Dorsolateral prefrontal cortex (tissue), 120 donors: ENCODE measurements at regions of chr2 and their contacts with region 1.

Region 1: DNA sequence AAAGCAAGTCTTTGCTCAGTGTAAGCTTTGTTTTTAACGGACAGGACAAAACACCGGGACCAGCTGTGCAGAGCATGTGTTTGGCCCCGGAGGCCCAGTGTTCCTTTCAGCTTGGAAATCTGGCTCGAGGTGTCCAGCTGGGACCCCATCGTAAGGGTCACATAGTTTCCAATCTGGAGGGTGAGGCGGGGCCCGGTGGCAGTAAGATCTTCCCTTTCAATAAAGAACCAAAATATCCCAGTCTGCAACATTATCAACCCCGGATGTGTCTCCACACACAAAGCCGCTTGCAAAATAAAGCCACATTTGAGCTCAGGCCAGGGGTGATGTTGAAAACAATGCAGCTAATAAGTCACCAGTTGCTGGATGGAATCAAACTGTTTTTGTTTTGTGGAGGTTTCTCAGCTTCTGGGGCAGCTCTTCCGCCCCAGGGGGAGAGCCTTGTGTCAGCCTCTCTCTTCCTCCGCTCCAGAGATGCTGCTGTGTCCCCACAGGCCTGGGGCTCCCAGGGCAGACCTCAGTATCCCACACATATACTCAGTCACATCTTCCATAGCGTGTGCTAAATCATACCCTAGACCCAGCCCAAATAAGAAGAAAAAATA is 138.6 kb upstream of the GLI2 start:
- DNase-seq: peak in 2 of 10 donors; percentile 30 to 48
- H3K4me3 ChIP-seq: peak overlapping the region in 4 of 59 donors; percentile 11 to 32 (median 23)
- H3K27ac ChIP-seq: peak overlapping the region in 49 of 59 donors; percentile 4 to 88 (median 69)
- H3K27me3 ChIP-seq: no peaks in the 10 kb centered on the region
- CTCF ChIP-seq: peak in 1 of 56 donors; percentile 18

Region 2: DNA sequence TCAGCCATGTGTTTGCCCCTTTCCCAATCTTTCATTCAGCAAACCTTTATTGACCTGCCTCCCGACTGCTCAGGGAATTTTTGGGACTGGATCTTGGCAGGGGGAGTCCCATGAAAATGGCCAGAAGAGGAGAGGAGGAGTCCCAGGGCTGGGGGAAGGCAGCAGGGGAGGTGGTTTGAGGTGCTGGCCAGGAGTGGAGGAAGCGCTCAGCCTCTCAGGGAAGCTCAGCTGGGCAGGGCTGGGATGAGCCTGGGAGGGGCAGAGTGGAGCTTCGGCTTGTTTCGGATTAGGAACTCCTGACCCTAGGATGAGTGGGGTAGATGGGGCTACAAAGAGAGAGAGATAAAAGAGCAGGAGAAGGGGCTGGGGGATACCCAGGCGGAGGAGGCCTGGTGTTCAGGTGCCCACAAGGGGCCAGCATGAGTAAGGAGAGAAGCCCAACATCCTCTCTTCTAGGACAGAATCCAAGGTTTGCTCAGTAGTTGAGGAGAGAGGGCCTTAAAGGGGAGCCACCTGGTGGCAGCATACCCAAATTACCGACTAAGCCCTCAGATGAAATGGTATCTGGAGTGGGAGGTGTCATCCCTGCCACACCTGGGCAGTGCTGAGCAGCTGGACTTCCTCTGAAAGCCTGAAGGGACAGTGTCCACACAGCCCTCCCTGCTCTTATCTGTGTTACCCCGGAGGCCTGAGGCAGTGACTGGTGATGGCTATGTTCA is 160.0 kb before region 1 on chr2:
- intact Hi-C with region 1: loop called in 1 of 2 experiments (anchors 5 kb)
- DNase-seq: peak in 2 of 10 donors; percentile 0 to 19
- H3K4me3 ChIP-seq: no peak overlapping the region
- H3K27ac ChIP-seq: no peak overlapping the region
- H3K27me3 ChIP-seq: peaks cover 0 to 39% (median 3%) of the 10 kb centered on the region in 45 donors
- CTCF ChIP-seq: peak in 28 of 56 donors; percentile 6 to 34 (median 25)

Region 3: DNA sequence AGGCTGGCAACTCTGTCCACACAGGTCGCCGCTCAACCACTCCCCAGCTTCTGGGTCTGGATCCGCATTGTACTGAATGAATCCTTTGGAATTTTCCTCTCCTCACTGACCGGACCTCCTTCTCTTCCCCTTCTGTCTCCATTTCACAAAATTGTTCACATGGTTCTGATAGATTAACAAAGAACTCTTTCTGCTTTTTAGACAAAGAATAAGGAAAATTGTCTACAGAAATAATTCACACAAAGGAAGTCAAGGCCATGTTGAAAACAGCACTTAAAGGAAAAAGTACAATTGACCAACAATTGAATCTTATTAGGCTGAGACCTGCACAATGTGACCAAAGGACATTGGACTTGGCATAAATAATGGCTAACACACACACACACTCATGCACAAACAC is 65.0 kb after region 1 on chr2:
- intact Hi-C with region 1: loop called in 1 of 2 experiments (anchors 2 kb)
- DNase-seq: no peak
- H3K4me3 ChIP-seq: peak overlapping the region in 46 of 59 donors; percentile 1 to 62 (median 34)
- H3K27ac ChIP-seq: peak overlapping the region in 33 of 59 donors; percentile 10 to 87 (median 51)
- H3K27me3 ChIP-seq: peaks cover 0 to 7% (median 0%) of the 10 kb centered on the region in 45 donors
- CTCF ChIP-seq: no peak

Region 4: DNA sequence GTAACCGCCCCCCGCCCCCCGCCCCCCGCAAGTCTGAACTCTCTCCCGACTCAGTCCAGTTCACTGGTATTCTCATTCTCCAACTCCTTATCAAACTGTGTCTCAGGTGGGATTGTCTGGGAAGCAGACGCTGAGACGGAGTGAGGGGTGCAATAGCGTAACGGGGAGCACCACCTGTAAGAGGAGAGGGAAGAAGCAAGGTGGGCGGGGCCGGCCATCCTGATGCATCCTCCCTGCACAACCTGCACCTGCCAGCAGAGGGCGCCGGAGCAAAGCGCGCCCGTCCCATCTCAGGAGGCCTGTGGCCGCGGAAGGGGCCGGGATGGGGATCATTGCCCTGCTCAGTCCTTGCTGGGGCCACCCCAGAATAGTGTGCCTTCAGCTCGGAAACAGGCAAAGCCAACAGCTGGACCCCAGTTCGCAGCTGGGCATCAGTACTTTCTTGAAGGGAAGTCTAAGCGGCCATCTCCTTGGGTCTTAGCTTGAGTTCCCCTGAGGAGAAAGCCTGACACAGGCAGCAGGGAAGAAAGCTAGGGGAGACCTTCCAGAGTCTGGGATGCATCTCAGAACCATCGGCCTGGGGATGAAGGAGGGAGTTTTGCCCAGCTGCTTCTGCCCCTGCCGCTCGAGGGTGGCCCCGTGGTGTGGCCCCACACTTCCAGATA is 479.9 kb after region 1 on chr2:
- intact Hi-C with region 1: loop called in 1 of 2 experiments (anchors 10 kb)
- DNase-seq: peak in 2 of 10 donors; percentile 24 to 38
- H3K4me3 ChIP-seq: no peak overlapping the region
- H3K27ac ChIP-seq: no peak overlapping the region
- H3K27me3 ChIP-seq: peaks cover 0 to 18% (median 0%) of the 10 kb centered on the region in 45 donors
- CTCF ChIP-seq: peak; percentile 39 to 79 (median 65)